K562 (cell line): ENCODE measurements at regions of chr7 and their contacts with region 1.

Region 1: DNA sequence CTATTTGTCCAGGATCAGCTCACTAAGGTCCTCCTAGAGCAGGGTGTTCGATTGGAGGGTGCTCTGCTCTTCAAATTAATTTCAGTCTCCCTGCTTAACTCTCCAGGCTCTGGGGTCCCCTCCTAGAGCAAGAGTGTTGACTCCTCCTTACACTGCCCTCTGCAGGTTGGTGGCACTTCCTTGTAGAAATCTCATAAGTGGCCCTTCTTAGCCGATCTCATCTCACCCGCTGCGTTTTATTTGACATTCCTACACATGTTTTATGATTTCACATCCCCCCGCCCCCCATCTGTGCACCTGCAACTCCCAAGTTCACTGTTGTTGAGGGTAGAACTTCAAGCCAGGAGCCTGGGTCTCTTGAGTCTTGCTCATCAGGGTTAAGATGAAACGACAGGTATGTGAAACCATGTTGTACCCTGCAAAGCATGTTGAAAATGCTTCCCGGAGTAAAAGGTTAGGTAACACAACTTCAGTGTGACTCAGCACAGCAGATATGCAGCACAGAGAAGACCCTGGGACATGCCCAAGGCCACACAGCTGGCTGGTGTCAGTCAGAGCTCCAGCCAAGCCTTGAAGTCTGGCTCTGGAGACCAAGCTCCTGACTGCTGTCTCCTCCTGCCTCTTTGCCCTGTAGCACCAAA is 171.2 kb downstream of the PRKAG2 start:
- DNase-seq: peak; percentile 48 to 65 (median 54)
- ATAC-seq: peak; percentile 84
- H3K4me3 ChIP-seq: no peak overlapping the region
- H3K27ac ChIP-seq: no peak overlapping the region
- H3K4me1 ChIP-seq: peaks cover 0 to 4% of the 10 kb centered on the region in 2 experiments; a peak in 2 of 5 replicates
- H3K27me3 ChIP-seq: peaks cover 49 to 88% of the 10 kb centered on the region in 2 experiments
- CTCF ChIP-seq: peak; percentile 64 to 73 (median 67)
- EP300 ChIP-seq: no peak
- POLR2A ChIP-seq: no peak
- RAD21 ChIP-seq: peak; percentile 58 to 59

Region 2: GRCh38 chr7:151626422-151627115 is 79.2 kb before region 1 on chr7:
- CTCF ChIA-PET with region 1: interaction called, 3 read pairs
- POLR2A ChIA-PET with region 1: no interaction called
- in situ Hi-C with region 1: no loop called
- intact Hi-C with region 1: loop called (anchors 2 kb)
- DNase-seq: peak in 2 of 4 experiments; percentile 27 to 29
- ATAC-seq: peak; percentile 74
- H3K4me3 ChIP-seq: no peak overlapping the region
- H3K27ac ChIP-seq: no peak overlapping the region
- H3K4me1 ChIP-seq: peaks cover 2 to 6% of the 10 kb centered on the region in 2 experiments; a peak in 3 of 5 replicates
- H3K27me3 ChIP-seq: peaks cover 56 to 77% of the 10 kb centered on the region in 2 experiments
- CTCF ChIP-seq: peak; percentile 53 to 57 (median 55)
- EP300 ChIP-seq: no peak
- POLR2A ChIP-seq: no peak
- RAD21 ChIP-seq: peak; percentile 44 to 53; a peak in 3 of 4 replicates

Region 3: GRCh38 chr7:151964951-151965350 is 259.2 kb after region 1 on chr7:
- CTCF ChIA-PET with region 1: no interaction called
- POLR2A ChIA-PET with region 1: no interaction called
- in situ Hi-C with region 1: no loop called
- intact Hi-C with region 1: no loop called
- DNase-seq: no peak
- ATAC-seq: no peak
- H3K4me3 ChIP-seq: no peak overlapping the region
- H3K27ac ChIP-seq: no peak overlapping the region
- H3K4me1 ChIP-seq: peaks cover 4 to 7% of the 10 kb centered on the region in 2 experiments; a peak in 3 of 5 replicates
- H3K27me3 ChIP-seq: peaks cover 0 to 29% of the 10 kb centered on the region in 2 experiments
- CTCF ChIP-seq: no peak
- EP300 ChIP-seq: no peak
- POLR2A ChIP-seq: no peak
- RAD21 ChIP-seq: no peak

Region 4: GRCh38 chr7:152485814-152486213 is 780.1 kb after region 1 on chr7:
- CTCF ChIA-PET with region 1: no interaction called
- POLR2A ChIA-PET with region 1: no interaction called
- in situ Hi-C with region 1: no loop called
- intact Hi-C with region 1: no loop called
- DNase-seq: no peak
- ATAC-seq: no peak
- H3K4me3 ChIP-seq: no peak overlapping the region
- H3K27ac ChIP-seq: no peak overlapping the region
- H3K4me1 ChIP-seq: no peaks in the 10 kb centered on the region; a peak in 1 of 5 replicates
- H3K27me3 ChIP-seq: no peaks in the 10 kb centered on the region
- CTCF ChIP-seq: no peak
- EP300 ChIP-seq: no peak
- POLR2A ChIP-seq: no peak
- RAD21 ChIP-seq: no peak